ENCODE measurements at regions of chr6 and their contacts with region 1.

Region 1: DNA sequence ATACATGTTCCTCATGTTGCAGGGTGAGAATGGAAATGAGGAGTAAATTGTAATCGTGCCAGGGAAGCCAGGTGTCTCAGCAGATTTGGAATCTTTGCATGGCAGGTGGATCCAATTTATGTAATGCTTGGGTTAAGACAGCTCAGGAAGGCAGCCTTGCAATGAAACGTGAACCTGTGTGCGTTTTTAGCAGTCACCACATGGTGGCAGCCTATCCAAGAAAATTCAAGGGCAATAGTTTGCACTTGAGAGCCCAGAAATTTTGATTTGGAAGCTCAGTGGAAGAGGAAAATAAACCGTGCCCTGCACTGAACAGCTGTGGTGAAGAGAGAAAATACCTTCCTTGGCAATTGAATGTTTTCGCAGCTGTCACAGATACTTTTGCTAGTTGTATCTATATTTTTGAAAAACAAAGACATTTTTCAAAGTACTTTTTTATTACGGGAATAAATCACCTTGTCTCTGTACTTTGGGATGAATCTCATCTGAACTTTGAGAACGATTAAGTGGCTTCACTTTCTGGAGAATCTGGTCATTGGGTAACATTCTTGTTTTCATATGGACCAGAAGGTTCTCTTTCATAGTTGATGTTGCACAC is 26.5 kb downstream of the MTHFD1L start:
- DNase-seq: peak; percentile 72
- H3K4me3 Mint-ChIP-seq: no peak overlapping the region
- H3K27ac Mint-ChIP-seq: no peak overlapping the region
- H3K4me1 Mint-ChIP-seq: peaks cover 6% of the 10 kb centered on the region
- H3K27me3 Mint-ChIP-seq: no peaks in the 10 kb centered on the region
- CTCF ChIP-seq: peak; percentile 74

Region 2: DNA sequence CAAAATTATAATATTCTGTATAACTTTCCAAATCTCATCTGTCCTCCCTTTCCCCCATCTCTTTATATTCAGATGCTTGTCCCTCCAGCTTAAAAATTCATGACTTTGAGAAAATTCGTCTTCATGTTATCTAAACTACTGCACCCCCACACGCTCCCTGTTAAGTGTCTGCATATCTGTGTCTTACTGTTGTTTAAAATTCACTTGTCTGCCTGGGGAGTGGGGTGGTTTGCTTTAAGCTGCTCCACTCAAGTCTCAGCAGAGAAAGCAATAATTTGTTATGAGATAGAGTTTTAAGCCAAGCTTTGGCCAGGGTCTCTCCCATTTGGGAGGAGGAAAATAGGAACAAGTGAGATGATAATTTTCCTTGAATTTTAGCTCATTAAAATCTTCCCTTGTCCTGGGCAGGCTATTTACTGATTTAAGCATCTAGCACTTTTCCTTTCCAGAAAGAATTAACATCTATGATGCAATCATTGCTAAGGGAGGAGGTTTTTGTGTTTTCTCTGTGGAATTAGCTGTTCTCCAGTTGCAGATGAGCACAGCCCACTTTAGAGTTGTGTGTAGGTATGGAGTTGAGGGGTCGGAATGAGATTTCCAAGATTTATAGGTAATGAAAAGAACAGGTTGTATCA is 10.3 kb after region 1 on chr6:
- CTCF ChIA-PET with region 1: interaction called, 35 read pairs
- POLR2A ChIA-PET with region 1: interaction called, 3 read pairs
- intact Hi-C with region 1: no loop called
- DNase-seq: no peak
- H3K4me3 Mint-ChIP-seq: no peak overlapping the region
- H3K27ac Mint-ChIP-seq: no peak overlapping the region
- H3K4me1 Mint-ChIP-seq: peaks cover 14% of the 10 kb centered on the region
- H3K27me3 Mint-ChIP-seq: no peaks in the 10 kb centered on the region
- CTCF ChIP-seq: no peak

Region 3: GRCh38 chr6:151330134-151330696 is 438.2 kb after region 1 on chr6:
- CTCF ChIA-PET with region 1: interaction called, 116 read pairs
- POLR2A ChIA-PET with region 1: interaction called, 11 read pairs
- intact Hi-C with region 1: loop called (anchors 1 kb)
- DNase-seq: no peak
- H3K4me3 Mint-ChIP-seq: no peak overlapping the region
- H3K27ac Mint-ChIP-seq: no peak overlapping the region
- H3K4me1 Mint-ChIP-seq: peaks cover under 1% of the 10 kb centered on the region
- H3K27me3 Mint-ChIP-seq: no peaks in the 10 kb centered on the region
- CTCF ChIP-seq: no peak

Measured in MCF 10A (cell line).